H1 (cell line): ENCODE measurements at regions of chr1 and their contacts with region 1.

Region 1: DNA sequence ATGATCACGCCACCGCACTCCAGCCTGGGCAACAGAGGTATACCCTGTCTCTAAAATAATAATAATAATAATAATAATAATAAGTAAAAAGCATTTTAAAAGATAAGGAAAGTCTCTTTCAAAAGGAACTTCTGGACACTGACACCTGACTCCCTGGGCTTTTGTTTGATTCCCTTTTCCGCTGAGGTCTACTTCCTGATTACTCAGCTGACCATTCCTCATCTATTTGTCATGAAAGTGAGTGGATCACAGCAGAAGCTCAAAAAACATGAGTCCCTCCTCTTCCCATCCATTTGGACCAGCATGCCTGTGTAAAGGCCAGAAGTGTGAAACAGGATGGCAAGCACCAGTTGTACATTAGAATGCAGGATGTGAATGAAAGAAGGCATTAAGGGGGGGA is 61.1 kb upstream of the FBXO28 start:
- DNase-seq: no peak
- H3K4me3 ChIP-seq: no peak overlapping the region
- H3K27ac ChIP-seq: no peak overlapping the region
- H3K4me1 ChIP-seq: no peaks in the 10 kb centered on the region
- H3K27me3 ChIP-seq: no peaks in the 10 kb centered on the region
- CTCF ChIP-seq: no peak
- EP300 ChIP-seq: no peak
- POLR2A ChIP-seq: no peak
- RAD21 ChIP-seq: no peak

Region 2: DNA sequence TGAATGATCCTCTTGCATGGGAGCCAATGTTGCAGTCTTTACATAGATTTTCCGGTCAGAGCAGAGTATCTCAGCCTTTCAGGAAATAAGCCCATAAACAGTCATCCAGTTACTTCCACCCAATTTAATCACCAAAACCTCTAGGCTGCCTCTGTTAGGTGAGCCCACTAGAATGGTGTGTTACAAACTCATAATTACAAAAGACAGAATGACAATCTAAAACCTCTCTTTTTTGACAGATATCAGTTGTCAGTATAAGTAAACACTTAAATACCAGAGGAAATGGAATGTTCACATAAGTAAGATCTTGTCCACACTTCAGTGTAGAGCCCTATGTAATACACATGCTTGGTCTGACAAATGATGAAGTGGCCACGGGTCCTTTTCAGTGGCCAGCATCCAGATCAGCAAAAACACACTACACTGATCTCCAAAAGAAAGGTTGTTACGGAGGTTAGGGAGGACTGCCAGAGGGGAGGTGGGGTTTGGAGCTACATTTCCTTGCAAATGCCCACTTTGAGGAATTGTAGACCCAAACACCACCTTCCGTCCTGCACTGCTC is 10.1 kb before region 1 on chr1:
- CTCF ChIA-PET with region 1: interaction called, 24 read pairs
- POLR2A ChIA-PET with region 1: interaction called, 4 read pairs
- DNase-seq: no peak
- H3K4me3 ChIP-seq: no peak overlapping the region
- H3K27ac ChIP-seq: no peak overlapping the region
- H3K4me1 ChIP-seq: no peaks in the 10 kb centered on the region
- H3K27me3 ChIP-seq: no peaks in the 10 kb centered on the region
- CTCF ChIP-seq: no peak
- EP300 ChIP-seq: no peak
- POLR2A ChIP-seq: no peak
- RAD21 ChIP-seq: no peak

Region 3: DNA sequence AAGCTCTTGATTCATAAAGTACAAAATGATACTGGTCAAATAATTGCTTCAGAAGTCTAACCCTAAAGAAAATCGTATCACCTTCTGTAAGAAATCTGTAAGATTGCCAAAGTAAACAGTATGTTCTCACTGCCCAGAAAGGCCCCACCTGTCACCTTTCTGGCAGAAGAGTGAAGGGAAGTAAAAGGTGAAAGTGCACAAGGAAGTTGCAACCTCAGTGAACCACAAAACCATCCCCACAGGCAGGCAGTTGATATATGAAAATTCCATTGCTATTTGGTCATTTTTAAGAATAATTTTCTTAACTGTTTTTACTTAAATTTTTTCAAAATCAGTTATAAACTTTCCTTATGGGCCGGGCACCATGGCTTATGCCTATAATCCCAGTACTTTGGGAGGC is 12.7 kb after region 1 on chr1:
- CTCF ChIA-PET with region 1: interaction called, 24 read pairs
- POLR2A ChIA-PET with region 1: no interaction called
- DNase-seq: no peak
- H3K4me3 ChIP-seq: no peak overlapping the region
- H3K27ac ChIP-seq: no peak overlapping the region
- H3K4me1 ChIP-seq: peaks cover 0 to 3% (median 0%) of the 10 kb centered on the region in 4 experiments; a peak in 1 of 7 replicates
- H3K27me3 ChIP-seq: no peaks in the 10 kb centered on the region
- CTCF ChIP-seq: no peak
- EP300 ChIP-seq: no peak
- POLR2A ChIP-seq: no peak
- RAD21 ChIP-seq: no peak

Region 4: DNA sequence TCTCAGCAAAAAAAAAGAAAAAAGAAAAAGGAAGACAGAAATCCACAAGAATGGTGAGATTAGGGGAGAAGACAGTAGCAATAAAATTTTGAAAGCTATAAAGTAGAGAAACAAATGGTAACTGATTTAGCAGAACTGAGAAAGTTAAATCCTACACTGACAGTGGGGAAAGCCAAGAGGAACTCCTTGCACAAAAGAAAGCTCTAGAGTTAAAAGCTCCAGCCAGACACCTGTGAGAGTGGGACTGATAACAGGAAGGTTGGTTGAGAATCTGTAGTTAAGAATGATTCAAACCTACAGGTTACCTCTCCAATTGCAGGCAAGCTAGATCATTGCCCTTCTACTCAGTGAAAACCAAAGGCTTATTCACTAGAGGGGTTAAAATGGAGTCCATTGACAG is 84.7 kb after region 1 on chr1:
- CTCF ChIA-PET with region 1: no interaction called
- POLR2A ChIA-PET with region 1: no interaction called
- DNase-seq: no peak
- H3K4me3 ChIP-seq: no peak overlapping the region
- H3K27ac ChIP-seq: no peak overlapping the region
- H3K4me1 ChIP-seq: no peaks in the 10 kb centered on the region
- H3K27me3 ChIP-seq: no peaks in the 10 kb centered on the region
- CTCF ChIP-seq: no peak
- EP300 ChIP-seq: no peak
- POLR2A ChIP-seq: no peak
- RAD21 ChIP-seq: no peak

Region 5: GRCh38 chr1:224160171-224160682 is 107.5 kb after region 1 on chr1:
- CTCF ChIA-PET with region 1: no interaction called
- POLR2A ChIA-PET with region 1: no interaction called
- DNase-seq: no peak
- H3K4me3 ChIP-seq: no peak overlapping the region
- H3K27ac ChIP-seq: no peak overlapping the region
- H3K4me1 ChIP-seq: peaks cover 0 to 10% (median 5%) of the 10 kb centered on the region in 4 experiments; a peak in 4 of 7 replicates
- H3K27me3 ChIP-seq: no peaks in the 10 kb centered on the region
- CTCF ChIP-seq: no peak
- EP300 ChIP-seq: no peak
- POLR2A ChIP-seq: no peak
- RAD21 ChIP-seq: no peak